ENCODE measurements at regions of chr3 and their contacts with region 1.

Region 1: GRCh38 chr3:115169808-115170207 is 22.7 kb upstream of the ZBTB20 start:
- H3K4me3 Mint-ChIP-seq: no peak overlapping the region
- H3K27ac Mint-ChIP-seq: no peak overlapping the region
- H3K4me1 Mint-ChIP-seq: no peaks in the 10 kb centered on the region
- H3K27me3 Mint-ChIP-seq: no peaks in the 10 kb centered on the region

Region 2: DNA sequence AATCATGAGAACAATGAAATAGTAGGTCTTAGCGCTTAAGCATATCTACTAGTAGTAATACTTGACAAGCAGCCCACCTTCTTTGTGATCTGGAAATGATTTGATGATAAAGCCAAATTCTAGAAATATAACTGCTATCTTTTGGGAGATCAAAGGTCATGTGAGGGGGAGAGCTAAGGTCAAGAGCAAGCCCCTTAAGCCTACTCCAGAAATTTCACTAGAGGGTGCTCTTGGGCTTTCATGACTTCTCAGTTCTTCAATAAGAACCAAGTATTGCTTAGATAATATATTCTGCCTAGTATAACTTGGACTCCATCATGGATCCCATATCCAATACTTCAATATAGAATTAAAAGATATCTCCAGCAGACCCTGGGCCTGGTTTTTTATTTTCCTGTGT is 342.3 kb before region 1 on chr3:
- intact Hi-C with region 1: loop called (anchors 5 kb)
- H3K4me3 Mint-ChIP-seq: no peak overlapping the region
- H3K27ac Mint-ChIP-seq: no peak overlapping the region
- H3K4me1 Mint-ChIP-seq: no peaks in the 10 kb centered on the region
- H3K27me3 Mint-ChIP-seq: no peaks in the 10 kb centered on the region

Region 3: GRCh38 chr3:115038828-115039227 is 131.0 kb before region 1 on chr3:
- intact Hi-C with region 1: loop called (anchors 5 kb)
- H3K4me3 Mint-ChIP-seq: no peak overlapping the region
- H3K27ac Mint-ChIP-seq: no peak overlapping the region
- H3K4me1 Mint-ChIP-seq: no peaks in the 10 kb centered on the region
- H3K27me3 Mint-ChIP-seq: no peaks in the 10 kb centered on the region

Region 4: GRCh38 chr3:115666920-115667737 is 497.3 kb after region 1 on chr3:
- intact Hi-C with region 1: no loop called
- H3K4me3 Mint-ChIP-seq: no peak overlapping the region
- H3K27ac Mint-ChIP-seq: no peak overlapping the region
- H3K4me1 Mint-ChIP-seq: no peaks in the 10 kb centered on the region
- H3K27me3 Mint-ChIP-seq: peaks cover 16% of the 10 kb centered on the region